ENCODE measurements at regions of chr2 and their contacts with region 1.

Region 1: GRCh38 chr2:108637304-108637669 is 82.0 kb upstream of the RANBP2 start:
- DNase-seq: peak; percentile 96
- ATAC-seq: peak; percentile 42
- H3K4me3 ChIP-seq: no peak overlapping the region
- H3K27ac ChIP-seq: peak overlapping the region; percentile 6; the same call in 1 of the 2 replicates
- H3K4me1 ChIP-seq: peaks cover 30% of the 10 kb centered on the region
- H3K27me3 ChIP-seq: no peaks in the 10 kb centered on the region
- CTCF ChIP-seq: no peak
- POLR2A ChIP-seq: peak; percentile 63; the same call in 1 of the 2 replicates
- RAD21 ChIP-seq: no peak

Region 2: DNA sequence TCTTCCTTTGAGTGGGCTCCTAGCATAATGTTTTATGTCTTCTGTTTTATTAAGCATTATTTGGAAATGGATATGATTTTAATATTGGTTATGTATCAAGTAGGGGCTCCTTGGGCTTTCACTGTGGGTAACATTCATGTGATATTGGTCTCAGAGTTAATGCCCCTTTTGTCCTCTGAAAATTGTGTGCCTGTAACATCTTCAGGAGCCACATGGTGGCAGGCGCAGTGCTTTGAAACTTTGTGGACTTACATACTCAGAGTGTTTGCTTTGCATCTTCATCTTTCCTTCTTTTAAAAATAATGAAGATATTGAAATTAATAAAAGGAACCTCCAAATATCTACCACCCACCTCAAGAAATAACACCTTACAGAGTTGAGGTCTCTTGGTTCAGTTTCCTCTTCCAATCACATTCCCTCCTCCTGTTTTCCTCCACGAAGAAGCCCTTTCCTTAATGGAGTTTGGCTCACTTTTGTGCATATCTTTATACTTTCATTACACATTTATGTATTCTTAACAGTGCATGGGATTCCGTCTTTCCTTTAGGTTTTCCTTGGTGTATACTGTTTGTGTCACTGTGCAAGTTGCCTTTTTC is 29.5 kb before region 1 on chr2:
- CTCF ChIA-PET with region 1: interaction called, 8 read pairs
- POLR2A ChIA-PET with region 1: no interaction called
- dilution Hi-C with region 1: no loop called
- in situ Hi-C with region 1: no loop called
- intact Hi-C with region 1: loop called (anchors 1 kb)
- DNase-seq: peak; percentile 59
- ATAC-seq: peak; percentile 68; the same call in 1 of the 2 replicates
- H3K4me3 ChIP-seq: no peak overlapping the region
- H3K27ac ChIP-seq: no peak overlapping the region
- H3K4me1 ChIP-seq: peaks cover 10% of the 10 kb centered on the region
- H3K27me3 ChIP-seq: no peaks in the 10 kb centered on the region
- CTCF ChIP-seq: peak; percentile 65
- POLR2A ChIP-seq: no peak
- RAD21 ChIP-seq: peak; percentile 81

Region 3: DNA sequence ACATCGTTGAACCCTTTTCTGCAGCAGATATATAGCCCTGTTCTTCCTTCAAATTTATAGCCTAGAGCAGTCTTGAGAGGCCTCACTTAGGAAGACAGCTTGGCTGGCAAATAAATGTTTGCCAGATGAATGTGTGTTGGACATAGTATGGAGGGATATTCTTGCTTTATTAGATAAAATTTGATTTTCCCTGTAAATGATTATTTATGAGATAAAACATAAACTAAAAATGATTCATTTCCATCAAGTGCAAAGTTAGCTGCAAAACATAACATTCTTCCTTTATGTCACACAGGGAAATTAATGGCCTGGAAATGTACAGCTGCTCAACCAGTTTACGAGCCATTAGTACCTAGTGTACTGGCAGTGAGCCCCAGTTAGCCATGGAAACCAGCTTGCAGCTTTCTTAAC is 20.5 kb before region 1 on chr2:
- CTCF ChIA-PET with region 1: interaction called, 18 read pairs
- POLR2A ChIA-PET with region 1: no interaction called
- dilution Hi-C with region 1: no loop called
- in situ Hi-C with region 1: no loop called
- intact Hi-C with region 1: no loop called
- DNase-seq: peak; percentile 55
- ATAC-seq: 0 out of 2 replicates have a peak, but pooled peaks have one; percentile 15
- H3K4me3 ChIP-seq: no peak overlapping the region
- H3K27ac ChIP-seq: no peak overlapping the region
- H3K4me1 ChIP-seq: peaks cover 46% of the 10 kb centered on the region
- H3K27me3 ChIP-seq: no peaks in the 10 kb centered on the region
- CTCF ChIP-seq: no peak
- POLR2A ChIP-seq: no peak
- RAD21 ChIP-seq: no peak

Region 4: GRCh38 chr2:108623616-108624015 is 13.7 kb before region 1 on chr2:
- CTCF ChIA-PET with region 1: interaction called, 11 read pairs
- POLR2A ChIA-PET with region 1: no interaction called
- dilution Hi-C with region 1: no loop called
- in situ Hi-C with region 1: no loop called
- intact Hi-C with region 1: loop called (anchors 1 kb)
- DNase-seq: peak; percentile 61
- ATAC-seq: peak; percentile 69
- H3K4me3 ChIP-seq: no peak overlapping the region
- H3K27ac ChIP-seq: no peak overlapping the region
- H3K4me1 ChIP-seq: peaks cover 17% of the 10 kb centered on the region
- H3K27me3 ChIP-seq: no peaks in the 10 kb centered on the region
- CTCF ChIP-seq: no peak
- POLR2A ChIP-seq: no peak
- RAD21 ChIP-seq: no peak